CD14-positive monocyte (primary cell): ENCODE measurements at regions of chr19 and their contacts with region 1.

Region 1: GRCh38 chr19:12551060-12551832 is at the start of gene ZNF564:
- DNase-seq: peak; percentile 92 to 96 (median 93)
- H3K4me3 ChIP-seq: peak within 1 kb of the TSS; percentile 64 to 93 (median 83)
- H3K4me3 Mint-ChIP-seq: peak within 1 kb of the TSS; percentile 97 to 99
- H3K27ac ChIP-seq: peak within 1 kb of the TSS; percentile 91 to 93
- H3K27ac Mint-ChIP-seq: peak within 1 kb of the TSS; percentile 91 to 97 (median 96)
- H3K4me1 ChIP-seq: peaks cover 15 to 26% of the 10 kb centered on the region in 2 donors
- H3K4me1 Mint-ChIP-seq: peaks cover 30% of the 10 kb centered on the region
- H3K27me3 ChIP-seq: no peaks in the 10 kb centered on the region
- H3K27me3 Mint-ChIP-seq: peaks cover 0 to 8% (median 7%) of the 10 kb centered on the region in 3 donors
- CTCF ChIP-seq: no peak
- polyA plus RNA-seq, gene ZNF564: 1.0 to 8.4 (median 8.4) TPM

Region 2: DNA sequence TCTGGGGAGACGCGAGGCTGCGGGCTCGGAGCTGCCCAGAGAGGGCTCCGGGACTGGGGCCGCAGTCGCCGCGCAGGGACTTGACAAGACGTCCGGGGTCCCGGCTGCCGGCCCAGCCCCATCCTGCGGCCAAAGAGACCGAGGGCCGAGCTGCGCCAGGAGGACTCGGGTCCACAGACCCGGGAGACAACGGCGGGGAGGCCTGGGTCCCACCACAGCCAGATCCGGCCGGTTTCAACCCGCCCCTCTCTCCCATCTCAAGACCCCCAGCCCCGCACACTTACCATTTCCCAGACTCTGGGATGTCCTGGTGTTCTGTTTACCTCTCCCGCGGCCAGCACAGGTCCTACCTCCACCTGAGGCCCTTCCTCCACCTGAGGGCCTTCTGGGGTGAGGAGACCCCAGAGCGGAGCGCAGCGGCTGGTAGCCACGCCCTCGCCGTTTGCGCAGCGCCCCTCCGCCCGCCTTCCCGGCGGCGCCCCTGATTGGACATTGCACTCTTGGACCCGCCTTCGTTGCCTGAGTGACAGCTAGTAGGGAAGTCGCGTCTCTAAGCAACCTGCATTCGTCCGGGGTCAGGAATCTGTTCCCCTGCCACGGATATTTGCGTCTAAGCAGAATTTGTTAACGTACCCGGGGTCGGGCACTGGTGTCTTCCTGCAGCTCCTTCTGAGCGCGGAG is 66.7 kb before region 1 on chr19 and contains the start of gene ZNF709:
- intact Hi-C with region 1: loop called in 1 of 2 experiments (anchors 5 kb)
- DNase-seq: peak; percentile 72 to 80 (median 73)
- H3K4me3 ChIP-seq: peak within 1 kb of the TSS; percentile 75 to 98 (median 88)
- H3K4me3 Mint-ChIP-seq: peak within 1 kb of the TSS; percentile 87 to 94
- H3K27ac ChIP-seq: peak within 1 kb of the TSS in 1 of 2 donors; percentile 73
- H3K27ac Mint-ChIP-seq: peak within 1 kb of the TSS in 6 of 7 donors; percentile 33 to 81 (median 74)
- H3K4me1 ChIP-seq: peaks cover 12 to 21% of the 10 kb centered on the region in 2 donors
- H3K4me1 Mint-ChIP-seq: peaks cover 31% of the 10 kb centered on the region
- H3K27me3 ChIP-seq: no peaks in the 10 kb centered on the region
- H3K27me3 Mint-ChIP-seq: peaks cover 2 to 6% (median 5%) of the 10 kb centered on the region in 3 donors
- CTCF ChIP-seq: no peak
- polyA plus RNA-seq, gene ZNF709: 0.15 to 0.28 (median 0.19) TPM

Region 3: DNA sequence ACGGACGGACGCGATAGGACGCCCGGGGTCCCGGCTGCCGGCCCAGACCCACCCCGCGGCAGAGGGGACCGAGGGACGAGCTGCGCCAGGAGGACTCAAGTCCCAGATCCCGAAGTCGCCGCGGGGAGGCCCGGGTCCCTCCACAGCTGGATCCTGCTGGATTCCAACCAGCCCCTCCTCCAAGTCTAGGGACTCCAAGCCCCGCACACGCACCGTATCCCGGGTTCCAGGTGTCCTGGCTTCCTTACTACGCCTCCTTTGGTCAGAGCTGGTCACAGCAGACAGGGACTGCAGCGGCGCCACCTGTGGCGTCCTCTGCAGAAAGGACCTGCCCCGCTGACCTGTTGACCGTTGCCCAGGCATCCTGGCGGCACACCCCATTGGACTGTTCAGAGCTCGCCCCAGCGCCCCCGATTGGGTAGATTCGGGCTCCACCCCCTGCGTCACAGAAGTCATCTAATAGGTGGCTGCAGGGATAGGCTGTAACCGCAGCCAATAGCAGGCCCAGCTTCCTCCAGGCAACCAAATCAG is 37.6 kb before region 1 on chr19:
- intact Hi-C with region 1: no loop called
- DNase-seq: no peak
- H3K4me3 ChIP-seq: no peak overlapping the region
- H3K4me3 Mint-ChIP-seq: no peak overlapping the region
- H3K27ac ChIP-seq: no peak overlapping the region
- H3K27ac Mint-ChIP-seq: no peak overlapping the region
- H3K4me1 ChIP-seq: no peaks in the 10 kb centered on the region
- H3K4me1 Mint-ChIP-seq: no peaks in the 10 kb centered on the region
- H3K27me3 ChIP-seq: peaks cover 0 to 3% of the 10 kb centered on the region in 2 donors
- H3K27me3 Mint-ChIP-seq: peaks cover 4 to 15% (median 11%) of the 10 kb centered on the region in 3 donors
- CTCF ChIP-seq: no peak

Region 4: DNA sequence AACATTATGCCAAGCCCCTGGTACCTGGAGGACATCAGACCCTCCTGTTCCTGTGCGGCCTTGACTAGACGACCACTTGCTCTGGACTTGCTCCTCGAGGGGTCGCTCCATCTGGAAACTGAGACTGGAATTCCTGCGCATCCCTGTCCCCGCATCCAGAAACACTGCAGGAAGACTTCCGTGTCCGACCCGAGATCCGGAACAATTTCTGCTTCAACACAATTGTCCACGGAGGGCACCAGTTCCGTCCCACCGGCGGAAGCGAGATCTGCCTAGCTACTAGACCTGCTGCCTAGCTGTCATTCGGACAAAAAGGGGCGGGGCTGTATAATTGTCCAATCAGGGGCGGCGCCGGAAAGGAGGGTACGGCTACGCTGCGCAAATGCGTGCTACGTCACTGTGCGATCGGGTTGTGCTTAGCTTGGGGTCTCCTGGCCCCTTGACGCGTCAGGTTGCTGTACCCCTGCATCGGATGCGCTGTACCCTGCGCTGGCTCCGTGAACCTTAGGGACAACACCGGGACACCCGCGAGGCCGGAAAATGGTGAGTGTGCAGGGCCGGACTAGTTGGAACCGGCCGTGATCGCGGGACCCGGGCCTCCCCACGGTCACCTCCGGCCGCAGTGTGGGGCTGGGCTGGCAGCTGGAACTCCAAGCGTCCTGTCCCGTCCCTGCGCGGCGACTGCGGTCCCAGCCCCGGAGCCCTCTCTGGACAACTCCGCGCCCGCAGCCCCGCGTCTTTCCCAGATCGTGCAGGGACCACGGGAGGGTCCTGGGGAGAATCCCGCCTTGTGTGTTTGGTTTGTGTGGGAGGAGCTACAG is 59.5 kb after region 1 on chr19 and contains the starts of genes ZNF490 and ZNF791:
- intact Hi-C with region 1: loop called in 1 of 2 experiments (anchors 10 kb)
- DNase-seq: peak; percentile 94 to 98 (median 95)
- H3K4me3 ChIP-seq: peak within 1 kb of the TSS; percentile 92 to 98 (median 94)
- H3K4me3 Mint-ChIP-seq: peak within 1 kb of the TSS; percentile 96 to 99
- H3K27ac ChIP-seq: peak within 1 kb of the TSS; percentile 86 to 94
- H3K27ac Mint-ChIP-seq: peak within 1 kb of the TSS; percentile 96 to 100 (median 98)
- H3K4me1 ChIP-seq: peaks cover 37 to 40% of the 10 kb centered on the region in 2 donors
- H3K4me1 Mint-ChIP-seq: peaks cover 37% of the 10 kb centered on the region
- H3K27me3 ChIP-seq: no peaks in the 10 kb centered on the region
- H3K27me3 Mint-ChIP-seq: peaks cover 2 to 6% (median 4%) of the 10 kb centered on the region in 3 donors
- CTCF ChIP-seq: no peak
- polyA plus RNA-seq, gene ZNF490: 2.3 to 4.2 (median 2.7) TPM
- polyA plus RNA-seq, gene ZNF791: 5.2 to 8.2 (median 5.9) TPM